Dendritic cell treated with granulocyte-macrophage colony-stimulating factor and Interleukin-4, amounts not matched to agents 40 ng/mL and 50 ng/mL, for 4 days (primary cell): ENCODE measurements at regions of chr21 and their contacts with region 1.

Region 1: DNA sequence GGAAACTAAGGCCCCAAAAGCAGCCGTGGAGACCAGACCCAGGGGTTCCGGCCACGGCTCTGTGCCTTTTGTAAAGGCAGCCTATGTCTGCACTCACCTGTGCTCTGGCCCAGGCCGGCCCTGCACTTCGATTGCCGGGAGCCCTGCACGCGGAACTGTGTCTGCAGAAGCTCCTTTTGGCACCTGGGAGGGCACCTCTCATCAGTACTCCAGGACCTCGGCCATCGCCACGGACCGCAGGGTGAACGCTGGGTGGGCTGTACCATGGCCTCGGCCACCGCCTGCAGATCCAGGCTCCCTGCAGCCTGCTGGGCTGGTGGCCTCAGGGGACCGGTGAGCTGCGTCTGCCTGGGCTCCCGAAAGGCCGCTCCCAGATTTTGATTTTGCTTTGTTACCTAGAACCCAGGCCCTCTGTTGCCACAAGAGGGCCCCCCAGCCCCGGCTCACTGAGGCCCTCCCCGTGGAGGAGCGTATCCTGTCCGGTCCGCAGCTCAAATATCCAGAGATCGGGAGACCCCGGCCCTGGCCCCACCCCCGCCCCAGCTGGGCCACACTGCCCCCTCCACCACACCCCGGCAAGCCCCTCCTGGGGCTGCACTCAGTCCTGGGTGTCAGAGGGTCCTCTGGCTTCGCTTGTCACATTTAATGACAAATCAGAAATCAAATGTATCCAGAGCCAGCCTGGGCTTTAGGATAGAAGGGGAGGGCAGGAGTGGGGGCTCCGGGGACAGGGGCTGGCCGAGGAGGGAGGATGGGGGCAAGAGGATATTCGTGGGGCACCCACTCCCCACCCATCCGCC is 60.2 kb upstream of the PDE9A start:
- H3K4me3 Mint-ChIP-seq: no peak overlapping the region
- H3K27ac Mint-ChIP-seq: no peak overlapping the region
- H3K4me1 Mint-ChIP-seq: peaks cover 14% of the 10 kb centered on the region
- H3K27me3 Mint-ChIP-seq: peaks cover 11% of the 10 kb centered on the region

Region 2: DNA sequence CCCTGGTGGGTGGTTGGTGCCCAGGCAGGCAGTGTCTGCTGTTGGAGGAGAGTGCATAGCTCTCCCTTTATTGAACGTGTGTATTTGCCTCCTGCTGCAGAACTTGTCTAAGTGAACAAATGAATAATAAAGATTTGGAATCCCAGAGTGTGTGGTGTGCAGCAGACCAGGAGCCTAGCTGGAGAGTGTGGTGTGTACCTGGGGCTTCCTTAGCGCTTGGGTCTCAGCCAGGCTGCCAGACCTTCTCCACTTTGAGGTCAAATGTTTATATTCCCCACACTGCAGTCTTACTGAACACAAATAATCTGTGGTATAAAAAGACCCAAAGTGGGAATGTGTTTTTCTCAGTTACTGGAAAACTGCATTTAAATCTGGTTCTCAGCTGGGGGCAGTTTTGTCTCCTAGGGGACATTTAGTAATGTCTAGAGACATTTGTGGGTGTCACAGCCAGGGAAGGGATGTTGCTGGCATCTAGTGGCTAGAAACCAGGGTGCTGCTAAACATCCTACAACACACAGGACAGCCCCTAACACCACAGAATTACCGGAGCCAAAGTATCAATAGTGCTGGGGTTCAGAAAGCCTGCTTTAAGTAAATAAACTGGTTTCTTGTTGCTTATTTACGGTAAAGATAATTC is 56.0 kb before region 1 on chr21:
- intact Hi-C with region 1: no loop called
- H3K4me3 Mint-ChIP-seq: no peak overlapping the region
- H3K27ac Mint-ChIP-seq: no peak overlapping the region
- H3K4me1 Mint-ChIP-seq: peaks cover 28% of the 10 kb centered on the region
- H3K27me3 Mint-ChIP-seq: no peaks in the 10 kb centered on the region

Region 3: GRCh38 chr21:42818328-42818749 is 225.1 kb after region 1 on chr21:
- intact Hi-C with region 1: loop called (anchors 2 kb)
- H3K4me3 Mint-ChIP-seq: no peak overlapping the region
- H3K27ac Mint-ChIP-seq: no peak overlapping the region
- H3K4me1 Mint-ChIP-seq: no peaks in the 10 kb centered on the region
- H3K27me3 Mint-ChIP-seq: peaks cover 2% of the 10 kb centered on the region